ENCODE measurements at regions of chr3 and their contacts with region 1.

Region 1: DNA sequence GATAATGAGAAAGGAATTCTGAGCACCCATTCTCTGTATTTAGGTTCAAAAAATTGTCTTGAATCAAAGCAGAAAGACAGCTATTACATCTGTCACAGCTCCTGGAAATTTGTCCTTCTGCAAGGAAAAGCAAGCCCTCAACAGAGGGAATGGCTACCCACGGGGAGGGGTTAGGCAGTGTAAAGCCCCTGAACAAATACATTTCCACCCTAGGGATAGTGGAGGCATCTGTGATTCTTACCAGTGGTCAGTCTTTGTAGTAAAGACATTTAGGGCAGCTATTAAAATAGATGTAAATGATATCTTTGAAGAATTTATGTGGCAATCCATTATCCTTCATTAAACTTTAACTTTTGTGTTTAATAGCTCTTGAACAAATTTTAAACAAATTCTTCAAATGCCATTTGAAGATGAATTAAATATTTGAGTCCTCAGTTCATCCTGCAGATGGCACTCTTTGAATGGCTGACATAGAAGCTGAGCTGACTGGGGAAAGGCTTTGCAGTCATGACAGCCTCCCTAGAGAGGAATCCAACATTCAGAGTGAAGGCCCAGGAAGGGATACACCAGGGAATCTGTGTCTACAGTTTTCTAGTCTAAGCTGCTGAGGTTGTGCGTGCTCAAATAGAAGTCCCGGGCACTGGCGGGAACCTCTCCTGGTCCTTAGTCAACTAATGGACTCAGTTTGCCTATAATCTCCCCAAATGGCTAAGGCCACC is 359.7 kb upstream of the ROPN1 start:
- DNase-seq: peak in 3 of 5 donors; percentile 23 to 49 (median 25)
- ATAC-seq: peak; percentile 67 to 80 (median 72)
- H3K4me3 ChIP-seq: no peak overlapping the region
- H3K27ac ChIP-seq: no peak overlapping the region
- H3K4me1 ChIP-seq: peaks cover 0 to 2% (median 0%) of the 10 kb centered on the region in 12 donors
- H3K27me3 ChIP-seq: no peaks in the 10 kb centered on the region
- CTCF ChIP-seq: peak; percentile 33 to 75 (median 61)
- POLR2A ChIP-seq: no peak

Region 2: GRCh38 chr3:124373524-124373923 is 21.9 kb after region 1 on chr3:
- intact Hi-C with region 1: no loop called
- DNase-seq: no peak
- ATAC-seq: no peak
- H3K4me3 ChIP-seq: no peak overlapping the region
- H3K27ac ChIP-seq: no peak overlapping the region
- H3K4me1 ChIP-seq: no peaks in the 10 kb centered on the region
- H3K27me3 ChIP-seq: no peaks in the 10 kb centered on the region
- CTCF ChIP-seq: no peak
- POLR2A ChIP-seq: no peak

Region 3: DNA sequence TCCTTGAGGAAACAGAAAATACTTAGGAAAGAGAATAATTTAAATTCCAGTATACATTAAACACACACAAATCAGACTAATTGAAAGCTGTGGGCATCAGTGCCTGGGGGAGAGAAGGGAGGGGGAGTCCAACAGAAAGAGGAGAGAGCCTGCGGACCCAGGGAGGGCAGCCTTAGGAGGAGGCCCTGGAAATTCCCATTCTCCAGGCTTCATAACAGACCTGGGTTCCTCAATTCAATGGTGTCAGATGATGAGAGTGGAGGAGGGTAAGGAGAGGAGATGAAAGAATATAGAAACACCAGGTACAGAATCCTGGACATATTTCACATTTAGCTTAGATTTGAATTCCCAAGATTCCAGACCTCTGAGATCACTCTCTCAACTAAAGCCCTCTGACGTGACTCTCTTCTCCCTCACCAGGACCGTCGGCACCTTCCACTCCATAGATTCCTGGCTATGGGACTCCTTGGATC is 58.2 kb after region 1 on chr3:
- intact Hi-C with region 1: loop called in 1 of 10 experiments (anchors 10 kb)
- DNase-seq: no peak
- ATAC-seq: peak in 2 of 4 donors; percentile 62 to 70
- H3K4me3 ChIP-seq: no peak overlapping the region
- H3K27ac ChIP-seq: no peak overlapping the region
- H3K4me1 ChIP-seq: peaks cover 0 to 7% (median 0%) of the 10 kb centered on the region in 12 donors
- H3K27me3 ChIP-seq: no peaks in the 10 kb centered on the region
- CTCF ChIP-seq: no peak
- POLR2A ChIP-seq: no peak

Region 4: GRCh38 chr3:124420392-124420791 is 68.8 kb after region 1 on chr3:
- intact Hi-C with region 1: loop called in 1 of 10 experiments (anchors 5 kb)
- DNase-seq: no peak
- ATAC-seq: peak in 3 of 4 donors; percentile 33 to 49 (median 35)
- H3K4me3 ChIP-seq: no peak overlapping the region
- H3K27ac ChIP-seq: no peak overlapping the region
- H3K4me1 ChIP-seq: peaks cover 0 to 10% (median 0%) of the 10 kb centered on the region in 12 donors
- H3K27me3 ChIP-seq: no peaks in the 10 kb centered on the region
- CTCF ChIP-seq: no peak
- POLR2A ChIP-seq: no peak

Region 5: DNA sequence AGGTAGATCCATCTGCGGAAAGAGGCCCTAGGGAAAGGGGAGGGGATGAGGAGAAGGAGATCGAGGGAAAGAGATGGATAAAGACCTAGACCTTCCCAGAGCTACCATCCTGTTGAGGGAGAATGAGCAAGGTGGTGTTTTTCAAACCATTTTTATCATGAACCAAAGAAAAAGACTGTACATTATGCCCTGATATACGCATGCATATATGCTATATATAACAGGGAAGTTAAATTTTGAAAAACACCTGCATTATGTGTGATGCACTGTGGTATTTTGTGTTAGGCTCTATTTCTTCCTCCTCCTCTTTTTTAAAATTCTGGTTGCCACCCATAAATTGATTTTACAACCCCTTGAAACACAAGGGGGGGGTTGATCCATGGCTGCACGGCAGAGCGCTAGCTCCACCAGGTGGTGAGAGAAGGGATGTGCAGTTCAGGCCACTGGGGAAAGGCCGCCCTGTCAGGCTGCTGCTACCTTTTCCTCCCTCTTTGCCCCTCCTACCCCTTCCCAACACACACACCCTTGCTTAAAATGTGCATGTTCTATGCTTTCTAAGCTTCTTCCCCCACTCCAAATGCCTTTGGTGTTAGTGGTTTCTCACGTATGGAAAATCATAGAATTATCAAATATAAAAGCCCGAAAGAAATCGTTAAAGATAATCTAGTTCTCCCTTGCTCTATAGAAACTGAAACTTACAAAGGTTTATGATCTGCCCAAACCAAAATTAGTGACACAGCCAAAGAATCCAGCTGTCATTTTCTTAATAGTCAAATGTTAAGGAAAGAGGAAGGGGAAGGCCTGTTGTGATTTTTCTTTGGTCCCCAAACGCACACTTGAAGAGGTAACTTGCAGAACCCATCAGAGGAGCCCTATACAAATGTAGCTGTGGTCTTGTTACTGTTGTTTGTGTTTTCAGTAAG is 116.7 kb after region 1 on chr3:
- intact Hi-C with region 1: loop called (anchors 1 to 5 kb)
- DNase-seq: peak; percentile 15 to 65 (median 28)
- ATAC-seq: peak; percentile 62 to 79 (median 74)
- H3K4me3 ChIP-seq: no peak overlapping the region
- H3K27ac ChIP-seq: no peak overlapping the region
- H3K4me1 ChIP-seq: no peaks in the 10 kb centered on the region
- H3K27me3 ChIP-seq: no peaks in the 10 kb centered on the region
- CTCF ChIP-seq: peak; percentile 84 to 98 (median 93)
- POLR2A ChIP-seq: no peak

Region 6: GRCh38 chr3:124542214-124542869 is 190.8 kb after region 1 on chr3:
- intact Hi-C with region 1: loop called in 1 of 10 experiments (anchors 10 kb)
- DNase-seq: no peak
- ATAC-seq: no peak
- H3K4me3 ChIP-seq: no peak overlapping the region
- H3K27ac ChIP-seq: no peak overlapping the region
- H3K4me1 ChIP-seq: peaks cover 0 to 9% (median 0%) of the 10 kb centered on the region in 12 donors
- H3K27me3 ChIP-seq: no peaks in the 10 kb centered on the region
- CTCF ChIP-seq: no peak
- POLR2A ChIP-seq: no peak

Region 7: GRCh38 chr3:124552239-124552638 is 200.7 kb after region 1 on chr3:
- intact Hi-C with region 1: loop called in 8 of 10 experiments (anchors 2 to 10 kb)
- DNase-seq: no peak
- ATAC-seq: peak in 3 of 4 donors; percentile 7 to 60 (median 13)
- H3K4me3 ChIP-seq: no peak overlapping the region
- H3K27ac ChIP-seq: no peak overlapping the region
- H3K4me1 ChIP-seq: peaks cover 0 to 25% (median 6%) of the 10 kb centered on the region in 12 donors
- H3K27me3 ChIP-seq: no peaks in the 10 kb centered on the region
- CTCF ChIP-seq: no peak
- POLR2A ChIP-seq: no peak

Region 8: DNA sequence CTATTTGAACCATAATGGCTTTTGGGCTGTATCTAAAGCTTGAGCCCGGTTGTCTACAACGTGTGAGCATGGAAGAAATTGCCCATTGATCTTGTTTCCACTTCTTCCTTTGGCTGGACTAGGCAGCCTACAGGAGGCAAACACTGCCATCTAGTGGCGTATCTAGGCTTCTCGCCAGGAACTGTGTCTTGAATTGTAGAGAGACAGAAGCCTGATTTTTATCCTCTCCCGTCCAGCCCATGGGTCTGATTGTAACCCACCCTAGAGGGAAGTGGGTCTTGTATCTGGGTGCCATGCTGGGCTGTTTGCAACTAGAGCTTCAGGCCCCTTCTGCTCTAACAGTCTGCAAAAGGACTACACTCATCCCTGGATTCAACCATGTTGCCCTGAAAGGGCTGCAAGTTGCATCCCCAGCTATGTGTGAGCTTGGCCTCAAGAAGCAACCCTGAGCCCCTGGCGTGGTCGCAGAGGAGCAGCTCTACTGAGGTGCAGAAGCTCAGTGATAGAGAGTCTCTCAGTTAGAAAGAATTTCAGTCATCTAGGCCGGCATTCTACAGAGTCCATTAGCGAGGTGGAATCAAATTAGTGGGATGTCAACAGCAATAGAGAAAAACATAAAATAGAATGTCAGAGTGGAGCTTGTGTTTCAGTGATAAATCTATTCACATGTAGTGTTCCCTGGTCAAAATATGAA is 208.4 kb after region 1 on chr3:
- intact Hi-C with region 1: loop called in 6 of 10 experiments (anchors 2 to 10 kb)
- DNase-seq: peak in 4 of 5 donors; percentile 50 to 69 (median 64)
- ATAC-seq: peak; percentile 57 to 79 (median 71)
- H3K4me3 ChIP-seq: no peak overlapping the region
- H3K27ac ChIP-seq: peak overlapping the region in 5 of 12 donors; percentile 17 to 41 (median 20)
- H3K4me1 ChIP-seq: peaks cover 4 to 38% (median 17%) of the 10 kb centered on the region in 12 donors
- H3K27me3 ChIP-seq: no peaks in the 10 kb centered on the region
- CTCF ChIP-seq: peak; percentile 80 to 94 (median 88)
- POLR2A ChIP-seq: no peak

Measured in heart left ventricle (tissue), 16 donors.